Activated CD8-positive, alpha-beta memory T cell treated with anti-CD3 and anti-CD28 coated beads, Interleukin-2, amount 10 ng/mL, durations not matched to agents 7 days and 5 days (primary cell): ENCODE measurements at regions of chr15 and their contacts with region 1.

Region 1: GRCh38 chr15:63402498-63403253 is 21.0 kb upstream of the CA12 start:
- DNase-seq: no peak
- ATAC-seq: peak; percentile 63
- H3K4me3 Mint-ChIP-seq: no peak overlapping the region
- H3K27ac Mint-ChIP-seq: no peak overlapping the region
- H3K4me1 Mint-ChIP-seq: peaks cover 18% of the 10 kb centered on the region
- H3K27me3 Mint-ChIP-seq: no peaks in the 10 kb centered on the region

Region 2: GRCh38 chr15:63166219-63166618 is 236.5 kb before region 1 on chr15:
- CTCF ChIA-PET with region 1: interaction called, 13 read pairs
- DNase-seq: no peak
- ATAC-seq: peak; percentile 36
- H3K4me3 Mint-ChIP-seq: no peak overlapping the region
- H3K27ac Mint-ChIP-seq: no peak overlapping the region
- H3K4me1 Mint-ChIP-seq: no peaks in the 10 kb centered on the region
- H3K27me3 Mint-ChIP-seq: peaks cover 5% of the 10 kb centered on the region

Region 3: DNA sequence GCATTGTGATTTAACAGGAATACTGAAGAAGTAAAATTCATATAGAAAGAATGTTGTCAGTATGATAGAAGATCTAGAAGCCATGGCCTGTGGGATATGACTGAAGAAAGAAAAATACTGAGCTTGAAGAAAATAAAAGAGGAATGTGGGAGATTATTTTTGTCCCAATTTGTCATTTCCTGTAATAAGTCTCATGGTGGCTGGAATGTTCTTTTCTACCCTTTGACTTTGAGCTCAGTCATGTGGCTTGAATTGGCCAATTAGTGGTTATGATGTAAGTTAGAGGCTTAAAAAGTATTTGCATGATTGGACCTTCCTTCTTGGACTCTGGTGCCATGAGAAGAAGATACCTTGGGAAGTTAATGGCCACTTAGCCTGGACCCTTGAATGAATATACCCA is 111.2 kb before region 1 on chr15:
- CTCF ChIA-PET with region 1: interaction called, 11 read pairs
- DNase-seq: no peak
- ATAC-seq: no peak
- H3K4me3 Mint-ChIP-seq: no peak overlapping the region
- H3K27ac Mint-ChIP-seq: no peak overlapping the region
- H3K4me1 Mint-ChIP-seq: peaks cover 9% of the 10 kb centered on the region
- H3K27me3 Mint-ChIP-seq: no peaks in the 10 kb centered on the region

Region 4: DNA sequence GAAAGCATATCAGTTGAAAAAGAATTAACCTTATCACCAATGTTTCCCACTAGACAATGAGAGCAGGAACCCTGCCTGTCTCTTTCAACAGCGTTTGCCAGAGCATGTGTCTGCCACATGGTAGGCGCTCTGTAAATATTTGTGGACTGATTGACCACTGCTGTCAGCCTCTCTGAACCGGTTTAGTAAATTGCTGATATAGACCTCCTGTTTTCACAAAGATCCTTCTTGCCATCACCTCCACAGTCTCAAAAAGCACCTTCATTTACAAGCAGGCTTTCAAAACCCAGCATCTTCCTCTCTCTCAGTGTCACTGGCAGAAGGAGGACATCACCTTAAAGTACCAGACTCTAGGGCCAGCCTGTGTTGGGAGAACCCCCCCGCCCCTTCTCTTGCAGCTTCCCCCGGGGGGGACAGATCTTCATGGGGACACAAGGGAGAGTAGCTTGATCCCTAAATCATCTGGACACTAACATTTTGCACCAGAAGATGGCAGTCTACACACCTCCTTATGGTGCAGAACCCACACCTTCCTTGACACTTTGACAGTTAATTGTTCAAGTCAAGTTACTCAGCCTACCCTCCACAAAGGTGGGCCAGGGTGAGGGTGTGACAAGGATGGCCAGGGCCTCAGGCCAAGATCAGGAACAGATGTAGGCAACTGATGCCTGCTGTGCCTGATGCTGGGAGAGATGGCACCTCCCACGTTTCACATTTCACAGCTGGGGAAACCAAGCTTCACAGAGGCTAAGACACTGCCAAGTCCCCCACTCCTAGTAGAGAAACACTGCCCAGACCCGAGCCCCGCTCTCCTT is 63.9 kb after region 1 on chr15:
- CTCF ChIA-PET with region 1: no interaction called
- DNase-seq: peak; percentile 68
- ATAC-seq: peak; percentile 94
- H3K4me3 Mint-ChIP-seq: no peak overlapping the region
- H3K27ac Mint-ChIP-seq: no peak overlapping the region
- H3K4me1 Mint-ChIP-seq: peaks cover 16% of the 10 kb centered on the region
- H3K27me3 Mint-ChIP-seq: peaks cover 3% of the 10 kb centered on the region